GM13976 (cell line): ENCODE measurements at regions of chr6 and their contacts with region 1.

Region 1: DNA sequence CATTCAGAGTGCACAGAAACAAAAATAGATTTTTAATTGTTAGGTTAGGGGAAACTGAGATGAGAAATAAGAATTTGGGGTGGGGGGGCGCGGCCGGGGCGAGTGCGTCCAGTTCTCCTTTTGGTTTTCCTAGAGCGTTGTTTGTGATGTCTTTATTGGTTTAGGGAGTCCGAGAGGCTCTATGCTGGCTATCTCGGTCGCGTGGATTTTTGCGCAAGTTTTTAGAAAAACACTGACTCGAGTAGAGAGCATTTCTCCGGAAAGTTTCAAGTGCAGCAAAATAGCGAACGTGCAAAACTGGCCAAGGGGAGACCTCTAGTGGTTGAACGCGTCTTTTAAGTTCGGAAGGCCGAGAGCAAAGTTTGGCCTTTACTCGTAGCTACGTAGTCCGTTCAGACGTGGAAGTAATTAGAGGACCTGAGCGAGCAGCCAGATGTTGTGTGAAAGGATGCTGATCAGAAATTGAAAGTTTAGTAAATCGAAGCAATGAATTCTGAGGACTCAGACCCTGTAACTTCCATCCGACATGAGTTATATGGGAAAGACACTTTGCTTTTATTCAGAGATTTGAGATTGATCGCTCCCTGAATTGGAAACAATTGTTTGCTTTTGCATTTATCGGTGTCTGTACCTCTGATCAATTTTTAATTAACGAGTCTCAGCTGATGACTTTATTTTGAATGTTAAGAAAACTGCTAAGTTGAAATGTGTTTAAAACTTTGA is 2.7 kb downstream of the L3MBTL3 start:
- DNase-seq: peak; percentile 73
- CTCF ChIP-seq: peak; percentile 77

Region 2: DNA sequence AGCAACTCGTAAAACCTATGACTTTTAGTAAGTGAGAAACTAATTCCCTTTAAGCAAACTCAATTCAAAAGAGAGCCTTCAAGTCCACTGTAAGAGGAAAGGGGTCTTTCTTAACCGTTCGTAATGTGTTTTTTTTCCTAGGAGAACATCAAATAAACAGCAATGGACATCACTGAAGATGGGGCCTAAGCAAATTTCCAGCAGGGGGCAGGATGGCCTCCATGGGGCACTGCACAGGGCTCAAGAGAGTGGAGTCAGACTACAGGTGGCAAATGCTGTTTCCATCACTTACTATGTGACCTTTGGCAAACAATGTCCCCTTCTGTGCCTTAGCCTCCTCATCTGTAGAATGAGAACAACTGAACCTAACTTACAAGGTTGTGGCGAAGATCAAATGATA is 399.8 kb before region 1 on chr6:
- in situ Hi-C with region 1: loop called (anchors 25 kb)
- DNase-seq: peak; percentile 11
- CTCF ChIP-seq: no peak

Region 3: GRCh38 chr6:129709769-129710449 is 311.2 kb before region 1 on chr6 and contains the start of gene ARHGAP18:
- in situ Hi-C with region 1: no loop called
- DNase-seq: peak; percentile 80
- CTCF ChIP-seq: no peak

Region 4: DNA sequence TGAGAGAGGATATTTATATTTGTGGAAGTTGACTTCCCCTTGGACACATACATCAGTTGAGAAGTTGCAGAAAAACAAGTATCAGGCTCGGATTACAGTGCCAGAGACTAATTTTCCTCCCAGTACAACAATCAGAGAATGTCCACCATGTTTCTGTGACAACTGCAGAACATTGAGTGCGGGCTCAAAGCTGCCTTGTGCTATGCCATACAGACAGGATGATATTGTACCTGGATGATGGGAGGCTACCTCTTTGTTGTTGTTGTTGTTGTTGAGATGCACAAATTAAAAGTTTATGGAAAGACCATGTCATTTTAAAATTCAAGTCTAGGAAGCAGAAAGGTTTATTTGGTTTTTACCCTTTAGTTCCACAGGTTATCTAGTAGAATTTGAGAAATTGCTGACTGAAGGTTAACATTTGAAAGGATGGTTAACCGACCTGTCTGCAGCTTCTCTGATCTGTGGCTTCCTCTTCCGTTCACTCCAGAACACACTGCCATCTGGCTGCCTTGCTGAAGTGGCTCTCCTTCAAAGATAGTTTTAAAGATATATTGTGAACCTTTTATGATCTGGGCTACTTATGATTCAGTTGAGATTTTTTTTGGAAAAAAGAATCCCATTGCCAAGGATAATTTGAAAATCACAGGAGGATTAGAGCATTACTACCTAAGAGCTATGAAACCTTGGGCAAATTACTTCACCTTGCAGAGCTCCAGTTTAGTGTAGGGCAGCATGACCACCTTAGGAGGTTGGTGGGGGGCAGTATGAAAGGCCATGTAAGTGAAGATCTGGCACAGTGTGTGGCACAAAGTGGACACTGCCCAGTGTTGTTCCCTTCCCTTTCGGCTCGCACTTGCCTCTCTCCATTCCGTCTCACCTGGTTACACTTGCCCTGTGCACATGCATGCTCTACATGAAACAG is 360.7 kb after region 1 on chr6:
- in situ Hi-C with region 1: no loop called
- DNase-seq: no peak
- CTCF ChIP-seq: no peak